ENCODE measurements at regions of chr22 and their contacts with region 1.

Region 1: DNA sequence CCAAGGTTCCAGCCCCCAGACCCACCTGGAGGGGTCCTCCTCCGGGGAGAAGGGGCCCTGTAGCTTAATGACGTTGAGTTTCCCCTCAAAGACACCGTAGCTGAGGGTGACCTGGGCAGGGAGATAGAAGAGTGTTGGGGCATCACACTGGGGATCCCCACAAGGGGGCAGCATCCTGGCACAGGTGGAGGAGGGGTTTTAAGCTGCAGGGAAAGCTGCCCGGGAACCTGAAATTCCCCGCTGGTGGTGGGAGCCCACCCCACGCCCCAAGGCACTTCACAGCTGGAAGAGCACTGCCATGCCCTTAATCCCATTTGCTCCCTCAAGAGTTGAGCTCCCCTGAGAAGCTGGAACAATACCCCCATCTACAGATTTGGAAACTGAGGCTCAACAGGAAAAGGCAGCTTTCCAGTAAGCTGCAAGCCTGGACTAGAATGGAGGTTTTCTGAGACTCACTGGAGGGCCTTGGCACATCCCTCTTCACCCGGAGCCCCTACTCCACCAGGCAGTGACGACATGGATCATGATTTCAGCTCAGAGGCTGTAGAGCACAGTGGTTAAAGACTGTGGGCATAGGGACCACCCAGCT is 13.7 kb downstream of the MFNG start:
- DNase-seq: peak; percentile 55
- H3K4me3 ChIP-seq: no peak overlapping the region
- H3K27ac ChIP-seq: peak overlapping the region; percentile 63
- H3K4me1 ChIP-seq: peaks cover 52% of the 10 kb centered on the region
- CTCF ChIP-seq: peak; percentile 87

Region 2: DNA sequence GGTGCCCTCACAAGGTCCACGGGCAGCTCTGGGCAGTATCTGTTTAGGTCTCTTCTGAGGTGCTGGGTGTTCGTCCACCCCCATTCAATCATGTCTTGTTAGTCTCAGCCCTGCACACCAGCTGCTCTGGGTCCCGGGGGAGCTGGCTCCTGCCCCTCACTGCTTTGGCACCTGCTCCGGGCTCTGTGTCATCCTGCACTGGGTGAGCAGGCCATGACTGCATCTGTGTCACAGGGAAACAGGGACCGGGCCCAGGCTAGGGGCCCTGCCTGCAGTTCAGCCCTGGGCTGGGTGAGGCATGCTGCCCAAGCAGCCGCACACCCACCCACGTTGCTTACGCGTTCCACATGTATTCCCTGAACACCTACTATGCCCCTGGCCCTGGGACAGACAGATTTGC is 89.2 kb before region 1 on chr22:
- CTCF ChIA-PET with region 1: no interaction called
- POLR2A ChIA-PET with region 1: no interaction called
- intact Hi-C with region 1: no loop called
- DNase-seq: peak; percentile 87
- H3K4me3 ChIP-seq: no peak overlapping the region
- H3K27ac ChIP-seq: peak overlapping the region; percentile 21
- H3K4me1 ChIP-seq: peaks cover 44% of the 10 kb centered on the region
- CTCF ChIP-seq: no peak

Region 3: GRCh38 chr22:37442537-37442936 is 30.0 kb before region 1 on chr22:
- CTCF ChIA-PET with region 1: no interaction called
- POLR2A ChIA-PET with region 1: no interaction called
- intact Hi-C with region 1: no loop called
- DNase-seq: peak; percentile 48
- H3K4me3 ChIP-seq: no peak overlapping the region
- H3K27ac ChIP-seq: no peak overlapping the region
- H3K4me1 ChIP-seq: peaks cover 4% of the 10 kb centered on the region
- CTCF ChIP-seq: no peak

Region 4: DNA sequence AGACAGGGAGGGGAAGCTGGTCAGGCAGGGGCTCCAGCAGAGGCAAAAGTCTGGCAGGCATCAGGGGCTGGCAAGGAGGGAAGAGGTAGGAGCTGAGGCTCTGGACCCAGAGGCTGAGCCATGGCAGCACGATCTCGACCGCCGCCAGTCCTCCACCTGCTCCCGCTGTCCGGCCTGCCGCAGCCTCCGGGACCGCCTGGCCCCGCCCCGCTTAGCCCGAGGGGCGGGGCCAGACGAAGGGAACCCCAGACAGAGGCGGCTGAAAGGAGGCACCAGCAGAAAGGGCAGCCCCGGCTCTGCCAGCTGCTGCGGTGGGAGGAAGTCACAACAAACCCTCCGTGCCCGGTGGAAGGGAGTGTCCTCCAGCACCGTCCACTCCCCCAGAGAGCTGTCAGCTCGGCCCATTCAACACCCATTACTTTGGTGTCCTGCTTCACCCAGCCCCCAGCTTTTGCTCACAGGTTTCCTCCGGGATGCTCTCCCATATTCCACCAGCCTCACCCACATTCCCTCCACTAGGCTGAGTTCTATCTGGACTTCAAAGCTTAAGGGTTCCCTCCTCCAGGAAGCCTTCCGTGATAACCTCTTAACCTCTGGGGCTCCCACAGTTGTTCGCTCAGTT is 13.8 kb after region 1 on chr22 and contains the start of gene MFNG:
- CTCF ChIA-PET with region 1: interaction called, 14 read pairs
- POLR2A ChIA-PET with region 1: interaction called, 6 read pairs
- intact Hi-C with region 1: loop called (anchors 1 kb)
- DNase-seq: peak; percentile 91
- H3K4me3 ChIP-seq: peak within 1 kb of the TSS; percentile 80
- H3K27ac ChIP-seq: peak within 1 kb of the TSS; percentile 91
- H3K4me1 ChIP-seq: peaks cover 52% of the 10 kb centered on the region
- CTCF ChIP-seq: no peak
- total RNA-seq, gene MFNG: 174 and 225 TPM in 2 replicates

Region 5: GRCh38 chr22:37669586-37669985 is 197.1 kb after region 1 on chr22:
- CTCF ChIA-PET with region 1: no interaction called
- POLR2A ChIA-PET with region 1: no interaction called
- intact Hi-C with region 1: no loop called
- DNase-seq: no peak
- H3K4me3 ChIP-seq: no peak overlapping the region
- H3K27ac ChIP-seq: no peak overlapping the region
- H3K4me1 ChIP-seq: peaks cover 10% of the 10 kb centered on the region
- CTCF ChIP-seq: no peak

Measured in OCI-LY7 (cell line).